Activated CD4-positive, alpha-beta memory T cell treated with anti-CD3 and anti-CD28 coated beads, Interleukin-2, amount 10 ng/mL, durations not matched to agents 7 days and 5 days (primary cell): ENCODE measurements at regions of chr7 and their contacts with region 1.

Region 1: GRCh38 chr7:95476904-95477594 is 8.7 kb upstream of the ASB4 start:
- DNase-seq: peak; percentile 56
- H3K4me3 Mint-ChIP-seq: no peak overlapping the region
- H3K27ac Mint-ChIP-seq: no peak overlapping the region
- H3K4me1 Mint-ChIP-seq: no peaks in the 10 kb centered on the region
- H3K27me3 Mint-ChIP-seq: peaks cover 6% of the 10 kb centered on the region

Region 2: DNA sequence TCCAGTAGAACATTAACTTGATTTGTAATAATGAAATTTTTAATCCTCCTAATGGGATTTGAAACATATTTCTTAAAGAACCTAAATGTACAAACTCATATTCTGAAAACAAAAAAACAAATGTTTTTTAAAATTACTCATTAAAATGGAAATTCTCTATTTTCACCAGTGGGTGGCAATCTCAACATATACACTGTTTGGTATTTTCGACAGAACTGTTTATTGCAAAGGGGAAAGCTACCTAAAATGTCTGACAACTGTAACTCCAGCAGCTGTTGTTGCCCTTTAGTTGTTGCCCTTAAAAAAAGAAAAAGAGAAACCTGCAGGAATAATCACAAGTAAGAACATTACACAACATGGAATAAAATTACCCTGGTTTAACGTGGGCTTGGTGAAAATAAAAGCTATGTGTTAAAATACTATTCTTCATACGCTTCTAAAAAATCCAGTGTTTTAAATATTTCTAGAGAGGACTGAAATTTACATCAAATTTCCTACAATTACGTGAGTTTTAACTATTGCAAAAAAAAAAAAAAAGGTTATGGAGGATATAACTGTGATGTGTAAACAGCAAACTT is 1027.8 kb before region 1 on chr7:
- CTCF ChIA-PET with region 1: interaction called, 24 read pairs
- POLR2A ChIA-PET with region 1: no interaction called
- DNase-seq: no peak
- H3K4me3 Mint-ChIP-seq: no peak overlapping the region
- H3K27ac Mint-ChIP-seq: no peak overlapping the region
- H3K4me1 Mint-ChIP-seq: no peaks in the 10 kb centered on the region
- H3K27me3 Mint-ChIP-seq: peaks cover 10% of the 10 kb centered on the region

Region 3: DNA sequence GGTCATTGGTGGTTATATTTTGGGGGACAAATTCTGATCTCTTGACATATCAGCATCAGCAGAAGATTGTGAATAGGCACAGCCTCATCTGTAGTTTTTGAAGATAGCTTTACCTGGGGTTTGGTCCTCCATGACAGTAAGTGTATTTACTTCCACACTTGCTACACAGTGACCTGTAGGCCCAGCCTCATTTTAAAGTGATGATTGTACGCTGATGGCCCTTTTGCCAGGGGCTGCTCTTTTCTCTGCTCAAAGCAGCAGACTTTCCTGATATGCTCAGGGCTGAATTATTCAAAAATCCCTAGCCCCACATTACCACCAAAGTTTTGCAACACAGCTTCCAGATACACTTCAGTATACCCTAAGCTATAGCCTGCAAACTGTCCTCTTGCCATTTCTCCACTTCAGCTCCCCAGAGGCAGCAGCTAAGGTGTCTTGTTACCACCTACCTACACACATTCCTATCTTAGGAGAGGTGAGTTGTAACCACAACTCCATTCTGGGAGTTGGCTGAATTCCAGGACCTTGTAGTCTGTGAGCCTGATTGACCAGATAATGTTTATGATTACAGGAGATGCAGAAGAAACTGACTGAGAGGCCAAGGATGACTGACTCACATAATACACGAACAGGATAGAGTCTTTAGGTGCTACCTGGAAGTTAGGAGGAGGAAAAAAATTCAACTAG is 14.7 kb after region 1 on chr7:
- CTCF ChIA-PET with region 1: interaction called, 13 read pairs
- POLR2A ChIA-PET with region 1: no interaction called
- DNase-seq: no peak
- H3K4me3 Mint-ChIP-seq: no peak overlapping the region
- H3K27ac Mint-ChIP-seq: no peak overlapping the region
- H3K4me1 Mint-ChIP-seq: no peaks in the 10 kb centered on the region
- H3K27me3 Mint-ChIP-seq: peaks cover 20% of the 10 kb centered on the region

Region 4: GRCh38 chr7:95501261-95501832 is 24.3 kb after region 1 on chr7:
- CTCF ChIA-PET with region 1: interaction called, 12 read pairs
- POLR2A ChIA-PET with region 1: no interaction called
- DNase-seq: peak; percentile 36
- H3K4me3 Mint-ChIP-seq: peak overlapping the region; percentile 26
- H3K27ac Mint-ChIP-seq: peak overlapping the region; percentile 64
- H3K4me1 Mint-ChIP-seq: peaks cover 33% of the 10 kb centered on the region
- H3K27me3 Mint-ChIP-seq: peaks cover 5% of the 10 kb centered on the region